Activated naive CD4-positive, alpha-beta T cell treated with anti-CD3 and anti-CD28 coated beads for 36 hours (primary cell): ENCODE measurements at regions of chr6 and their contacts with region 1.

Region 1: DNA sequence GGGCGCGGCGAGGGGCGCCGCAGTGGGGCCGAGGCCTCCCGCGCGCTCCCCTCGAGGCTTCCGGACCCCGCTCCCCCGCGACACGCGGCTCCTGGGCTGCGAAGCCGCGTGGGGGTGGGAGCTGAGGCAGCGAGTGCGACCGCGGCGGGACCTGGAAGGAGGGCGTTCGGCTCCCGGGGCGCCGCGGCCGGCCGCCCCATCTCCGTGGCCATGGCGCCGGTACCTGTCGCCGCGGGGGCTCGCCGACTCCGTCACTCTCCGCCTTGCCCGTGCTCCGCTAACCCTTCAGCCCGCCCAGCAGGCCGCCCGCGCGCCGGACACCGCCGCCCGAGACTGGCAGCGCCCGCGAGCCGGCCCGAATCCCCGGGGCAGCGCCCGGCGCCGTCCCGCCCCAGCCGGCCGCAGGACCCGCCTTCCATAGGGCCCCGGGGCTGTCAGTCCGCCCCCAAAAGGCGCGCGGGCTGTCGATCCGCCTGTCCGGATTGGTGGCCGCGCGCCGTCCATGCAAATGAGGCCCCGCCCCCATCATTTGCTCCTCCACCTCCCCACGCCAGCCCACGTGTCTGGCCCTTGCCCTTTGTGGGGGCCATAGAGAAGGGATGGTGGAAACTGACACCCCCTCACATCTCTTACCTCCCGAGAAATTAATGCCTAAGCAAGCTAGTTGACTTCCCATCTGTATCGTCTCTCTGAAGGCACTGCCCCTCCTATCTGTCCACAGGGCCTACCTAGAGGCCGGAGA is at the start of gene FKBP5:
- DNase-seq: peak; percentile 92
- H3K4me3 Mint-ChIP-seq: peak within 1 kb of the TSS; percentile 97
- H3K27ac Mint-ChIP-seq: peak within 1 kb of the TSS; percentile 94
- H3K4me1 Mint-ChIP-seq: peaks cover 16% of the 10 kb centered on the region
- H3K27me3 Mint-ChIP-seq: no peaks in the 10 kb centered on the region
- total RNA-seq, gene FKBP5: 202 to 208 TPM

Region 2: DNA sequence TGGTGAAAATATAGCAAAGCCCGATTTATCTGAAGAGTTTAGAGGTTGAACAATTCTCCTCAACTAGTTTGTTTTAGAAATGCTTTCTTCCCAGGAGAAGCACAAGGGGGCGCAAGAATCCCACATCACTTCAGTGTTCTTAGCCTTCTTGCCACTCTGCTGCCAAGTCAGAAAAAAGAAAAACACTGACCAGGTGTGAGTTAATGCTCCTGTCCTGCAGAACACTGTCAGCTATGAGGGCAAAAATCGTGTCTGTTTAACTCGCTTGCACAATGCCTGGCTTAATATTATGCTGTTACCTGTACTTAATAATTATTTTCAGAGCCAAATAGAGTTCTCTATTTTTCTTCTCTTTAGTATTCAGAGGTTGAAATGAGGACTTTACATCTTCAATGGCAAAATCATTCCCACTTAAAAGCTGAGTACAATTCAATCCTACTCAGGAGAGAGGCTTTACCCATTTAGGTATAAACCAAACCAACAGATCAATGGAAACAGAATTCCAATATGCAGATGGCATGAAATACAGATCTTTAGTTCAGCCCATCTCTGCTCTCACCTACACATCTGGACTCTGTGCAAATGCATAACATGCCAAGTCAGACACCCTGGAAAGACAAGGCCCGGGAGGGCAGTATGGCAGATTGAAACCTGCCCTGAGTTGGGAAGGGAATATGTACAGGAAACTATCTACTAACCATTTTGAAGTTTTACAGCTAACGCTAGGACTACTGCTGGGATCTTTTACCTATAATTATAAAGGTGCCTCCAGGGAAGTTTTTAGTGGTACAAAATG is 104.7 kb before region 1 on chr6:
- CTCF ChIA-PET with region 1: interaction called, 3 read pairs
- intact Hi-C with region 1: loop called (anchors 2 kb)
- DNase-seq: peak; percentile 87
- H3K4me3 Mint-ChIP-seq: no peak overlapping the region
- H3K27ac Mint-ChIP-seq: peak overlapping the region; percentile 37
- H3K4me1 Mint-ChIP-seq: peaks cover 64% of the 10 kb centered on the region
- H3K27me3 Mint-ChIP-seq: no peaks in the 10 kb centered on the region

Region 3: GRCh38 chr6:35663447-35664235 is 25.1 kb before region 1 on chr6:
- CTCF ChIA-PET with region 1: interaction called, 7 read pairs
- intact Hi-C with region 1: loop called (anchors 1 kb)
- DNase-seq: no peak
- H3K4me3 Mint-ChIP-seq: no peak overlapping the region
- H3K27ac Mint-ChIP-seq: no peak overlapping the region
- H3K4me1 Mint-ChIP-seq: peaks cover 30% of the 10 kb centered on the region
- H3K27me3 Mint-ChIP-seq: no peaks in the 10 kb centered on the region

Region 4: GRCh38 chr6:35710241-35710847 is 21.6 kb after region 1 on chr6:
- CTCF ChIA-PET with region 1: interaction called, 4 read pairs
- intact Hi-C with region 1: loop called (anchors 1 kb)
- DNase-seq: peak; percentile 79
- H3K4me3 Mint-ChIP-seq: no peak overlapping the region
- H3K27ac Mint-ChIP-seq: peak overlapping the region; percentile 75
- H3K4me1 Mint-ChIP-seq: peaks cover 30% of the 10 kb centered on the region
- H3K27me3 Mint-ChIP-seq: no peaks in the 10 kb centered on the region

Region 5: GRCh38 chr6:35725721-35726438 is 37.1 kb after region 1 on chr6:
- CTCF ChIA-PET with region 1: interaction called, 7 read pairs
- intact Hi-C with region 1: loop called (anchors 1 kb)
- DNase-seq: peak; percentile 52
- H3K4me3 Mint-ChIP-seq: peak overlapping the region; percentile 61
- H3K27ac Mint-ChIP-seq: peak overlapping the region; percentile 82
- H3K4me1 Mint-ChIP-seq: peaks cover 80% of the 10 kb centered on the region
- H3K27me3 Mint-ChIP-seq: no peaks in the 10 kb centered on the region